ENCODE measurements at regions of chr6 and their contacts with region 1.

Region 1: DNA sequence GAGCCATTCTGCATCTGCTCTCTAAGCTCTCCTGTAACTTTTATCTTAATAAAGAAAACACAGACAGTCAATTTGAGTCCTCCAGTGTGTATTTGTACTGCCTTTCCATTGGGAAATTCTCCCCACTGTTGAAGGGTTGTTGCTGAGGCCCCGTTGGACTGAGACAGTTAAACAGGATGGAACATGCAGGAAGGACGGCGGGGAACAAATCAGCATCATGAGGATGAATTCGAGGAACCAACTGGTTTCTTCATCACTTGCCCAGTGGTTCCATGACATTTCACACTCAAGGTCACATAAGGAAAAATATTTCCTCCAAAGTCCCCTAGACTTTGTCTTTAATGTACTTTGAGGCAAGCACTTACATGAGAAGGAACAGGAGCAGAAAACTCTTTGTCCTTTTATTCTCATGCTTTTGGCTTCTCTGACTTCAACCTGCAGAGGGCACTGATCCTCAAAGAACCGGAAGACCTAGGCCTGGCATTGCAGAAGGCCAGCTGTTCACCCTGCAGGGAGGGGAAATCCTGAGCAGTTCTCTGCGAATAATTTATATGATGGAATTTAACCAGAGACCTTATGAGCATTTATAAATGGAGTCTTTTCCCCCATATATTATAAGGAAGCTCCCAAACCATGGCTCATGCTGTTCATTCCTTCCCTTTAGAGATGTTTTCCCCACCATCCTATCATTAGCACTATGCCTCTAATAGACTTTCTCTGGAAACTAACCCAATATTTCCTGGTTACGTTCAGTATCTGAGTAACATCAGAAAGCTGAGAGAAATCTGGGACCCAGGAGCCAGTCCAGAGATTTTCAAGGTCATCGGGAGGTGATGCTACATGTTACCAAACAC is 55.2 kb upstream of the ADGRF1 start:
- DNase-seq: peak; percentile 88
- ATAC-seq: peak; percentile 80
- H3K4me3 ChIP-seq: no peak overlapping the region
- H3K27ac ChIP-seq: peak overlapping the region; percentile 53
- H3K4me1 ChIP-seq: peaks cover 50% of the 10 kb centered on the region
- H3K27me3 ChIP-seq: no peaks in the 10 kb centered on the region
- CTCF ChIP-seq: peak; percentile 90

Region 2: DNA sequence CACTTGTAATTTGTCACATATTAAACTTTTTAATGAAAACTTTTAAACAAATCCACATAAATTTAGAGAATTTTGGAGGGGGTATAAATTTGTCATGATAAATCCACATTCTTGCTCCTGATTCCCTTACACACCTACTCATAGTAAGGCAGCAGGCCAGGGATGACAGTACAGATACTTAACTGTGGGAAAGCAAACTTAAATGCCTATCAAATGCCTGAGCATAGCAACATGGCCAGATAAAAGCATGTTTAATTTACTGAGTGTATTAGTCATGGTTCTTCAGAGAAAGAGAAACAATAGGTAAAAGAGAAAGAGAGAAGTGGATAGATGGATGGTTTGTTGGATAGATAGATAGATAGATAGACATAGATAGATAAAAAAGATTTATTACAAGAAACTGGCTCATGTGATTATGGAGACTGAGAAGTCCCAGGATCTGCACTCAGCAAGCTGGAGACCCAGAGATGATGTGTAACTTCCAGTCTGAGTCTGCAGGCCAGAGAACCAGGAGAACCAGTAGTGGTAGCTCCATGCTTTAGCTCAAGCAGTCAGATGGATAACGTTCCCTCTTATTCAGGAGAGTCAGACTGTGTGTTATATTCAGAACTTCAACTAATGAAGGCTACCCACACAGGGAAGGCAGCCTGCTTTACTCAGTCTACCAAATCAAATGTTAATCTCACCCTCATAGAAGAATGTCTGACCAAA is 39.3 kb before region 1 on chr6:
- CTCF ChIA-PET with region 1: no interaction called
- POLR2A ChIA-PET with region 1: no interaction called
- intact Hi-C with region 1: loop called (anchors 5 kb)
- DNase-seq: peak; percentile 98
- ATAC-seq: peak; percentile 76
- H3K4me3 ChIP-seq: no peak overlapping the region
- H3K27ac ChIP-seq: peak overlapping the region; percentile 96
- H3K4me1 ChIP-seq: peaks cover 49% of the 10 kb centered on the region
- H3K27me3 ChIP-seq: no peaks in the 10 kb centered on the region
- CTCF ChIP-seq: no peak

Region 3: DNA sequence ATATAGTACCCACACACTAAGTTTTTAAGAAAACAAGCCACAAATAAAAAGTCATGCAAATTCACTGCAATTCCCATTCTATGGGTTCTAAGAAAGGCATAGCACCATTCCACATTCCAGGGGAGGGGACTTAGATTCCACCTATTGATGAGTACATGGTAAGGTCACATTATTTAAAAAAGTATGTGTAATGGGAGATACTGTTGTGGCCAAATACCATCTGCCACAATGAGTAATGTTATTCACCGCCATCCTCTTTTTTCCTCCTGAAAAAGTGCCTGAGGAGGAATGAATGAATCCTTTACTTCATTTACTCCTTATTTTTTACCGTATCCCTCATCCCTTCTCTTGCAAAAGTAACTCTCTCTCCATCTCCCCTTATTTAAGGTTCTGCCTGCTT is 28.2 kb before region 1 on chr6:
- CTCF ChIA-PET with region 1: no interaction called
- POLR2A ChIA-PET with region 1: no interaction called
- intact Hi-C with region 1: no loop called
- DNase-seq: peak; percentile 58
- ATAC-seq: no peak
- H3K4me3 ChIP-seq: no peak overlapping the region
- H3K27ac ChIP-seq: no peak overlapping the region
- H3K4me1 ChIP-seq: peaks cover 30% of the 10 kb centered on the region
- H3K27me3 ChIP-seq: no peaks in the 10 kb centered on the region
- CTCF ChIP-seq: no peak

Region 4: DNA sequence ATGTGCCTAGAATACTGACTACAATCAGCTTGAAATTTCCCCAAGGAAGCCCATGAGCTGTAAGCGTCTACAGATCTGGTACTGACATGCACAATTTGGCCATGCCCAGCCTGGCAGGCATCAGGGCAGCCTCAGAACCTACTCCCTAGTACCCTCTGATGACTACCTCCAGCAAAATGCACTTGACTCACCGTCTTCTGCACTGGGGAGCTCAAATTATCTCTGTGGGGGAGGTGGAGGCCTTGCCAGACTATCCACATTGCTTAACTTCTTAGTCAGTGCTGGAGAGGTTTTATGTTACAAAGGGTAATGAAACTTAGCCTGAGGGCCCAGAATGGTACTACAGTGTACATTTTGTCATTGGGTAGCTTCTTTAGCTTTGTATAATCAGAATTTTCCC is 70.9 kb after region 1 on chr6:
- CTCF ChIA-PET with region 1: interaction called, 5 read pairs
- POLR2A ChIA-PET with region 1: no interaction called
- intact Hi-C with region 1: loop called (anchors 5 kb)
- DNase-seq: peak; percentile 98
- ATAC-seq: peak; percentile 99
- H3K4me3 ChIP-seq: no peak overlapping the region
- H3K27ac ChIP-seq: peak overlapping the region; percentile 91
- H3K4me1 ChIP-seq: peaks cover 50% of the 10 kb centered on the region
- H3K27me3 ChIP-seq: no peaks in the 10 kb centered on the region
- CTCF ChIP-seq: no peak

Region 5: DNA sequence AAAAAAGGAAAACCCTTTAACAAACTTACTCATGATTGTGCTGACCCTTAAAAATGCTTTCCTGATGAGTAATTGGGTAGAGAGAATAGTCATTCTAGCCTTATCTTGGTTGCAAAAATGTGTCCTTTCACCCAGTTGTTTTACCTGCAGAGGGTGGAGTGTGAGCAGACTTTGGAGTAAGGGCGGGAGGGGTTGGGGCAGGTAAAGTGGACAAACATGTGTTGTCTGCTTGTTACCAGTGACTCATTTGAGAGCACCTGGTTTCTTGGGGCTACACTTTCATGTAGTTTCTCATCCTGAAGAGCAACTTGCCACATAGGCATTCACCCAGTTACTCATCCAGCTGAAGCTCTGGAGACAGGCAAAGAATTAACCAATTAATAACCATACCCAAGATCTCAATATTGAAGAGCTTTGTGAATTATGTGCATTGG is 91.3 kb after region 1 on chr6:
- CTCF ChIA-PET with region 1: no interaction called
- POLR2A ChIA-PET with region 1: no interaction called
- intact Hi-C with region 1: loop called (anchors 5 kb)
- DNase-seq: peak; percentile 97
- ATAC-seq: peak; percentile 91
- H3K4me3 ChIP-seq: 0 out of 2 replicates have a peak overlapping the region, but pooled peaks have one; percentile 25
- H3K27ac ChIP-seq: peak overlapping the region; percentile 82
- H3K4me1 ChIP-seq: peaks cover 33% of the 10 kb centered on the region
- H3K27me3 ChIP-seq: no peaks in the 10 kb centered on the region
- CTCF ChIP-seq: no peak

Region 6: DNA sequence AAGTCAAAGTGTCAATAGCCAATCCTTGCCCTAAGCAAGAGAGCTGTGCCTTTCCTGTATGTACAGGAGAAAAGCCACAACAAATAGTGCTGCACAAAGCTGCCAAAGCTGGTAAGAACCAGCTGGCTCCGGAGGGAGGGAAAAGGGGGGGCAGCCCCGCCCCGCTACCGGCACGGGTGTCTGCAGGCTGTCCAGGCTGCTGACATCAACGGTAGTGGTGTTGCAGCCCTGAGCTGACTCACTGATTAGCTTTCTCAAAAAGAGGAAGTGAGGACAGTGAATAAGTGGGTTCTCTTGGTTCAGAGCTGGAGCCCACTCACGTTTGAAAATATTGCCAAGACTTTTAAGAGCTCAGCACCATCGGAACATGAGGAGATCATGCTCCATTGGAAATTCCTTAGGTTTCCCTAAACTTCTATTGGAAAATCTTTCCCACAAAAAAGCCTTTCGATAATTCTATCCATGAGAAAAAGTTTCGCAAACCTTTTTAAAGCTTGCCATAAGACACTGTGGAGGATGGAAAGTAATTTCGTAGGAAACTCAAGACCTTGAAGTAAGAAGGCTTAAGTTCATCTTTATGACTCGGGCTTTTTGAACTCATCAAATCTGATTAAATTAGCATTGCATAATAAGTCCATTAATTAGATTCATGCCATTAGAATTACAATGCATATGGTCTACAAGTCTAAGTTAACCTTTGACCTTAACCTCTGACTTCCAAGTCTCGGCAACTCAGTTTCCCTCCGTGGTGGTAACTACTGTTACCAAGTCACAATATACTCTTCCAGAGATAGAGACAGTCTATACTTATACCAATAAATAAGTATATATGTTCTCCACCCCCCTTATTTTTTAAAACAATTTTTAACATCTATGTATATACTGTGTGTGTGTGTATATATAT is 145.4 kb after region 1 on chr6:
- CTCF ChIA-PET with region 1: interaction called, 3 read pairs
- POLR2A ChIA-PET with region 1: no interaction called
- intact Hi-C with region 1: loop called (anchors 1 kb)
- DNase-seq: peak; percentile 87
- ATAC-seq: peak; percentile 95
- H3K4me3 ChIP-seq: no peak overlapping the region
- H3K27ac ChIP-seq: peak overlapping the region; percentile 63
- H3K4me1 ChIP-seq: peaks cover 17% of the 10 kb centered on the region
- H3K27me3 ChIP-seq: no peaks in the 10 kb centered on the region
- CTCF ChIP-seq: no peak

Region 7: GRCh38 chr6:47407348-47408281 is 310.3 kb after region 1 on chr6:
- CTCF ChIA-PET with region 1: no interaction called
- POLR2A ChIA-PET with region 1: no interaction called
- intact Hi-C with region 1: loop called (anchors 2 kb)
- DNase-seq: peak; percentile 95
- ATAC-seq: peak; percentile 63
- H3K4me3 ChIP-seq: no peak overlapping the region
- H3K27ac ChIP-seq: peak overlapping the region; percentile 95
- H3K4me1 ChIP-seq: peaks cover 51% of the 10 kb centered on the region
- H3K27me3 ChIP-seq: no peaks in the 10 kb centered on the region
- CTCF ChIP-seq: no peak

Region 8: GRCh38 chr6:47524136-47524845 is 427.0 kb after region 1 on chr6:
- CTCF ChIA-PET with region 1: no interaction called
- POLR2A ChIA-PET with region 1: no interaction called
- intact Hi-C with region 1: no loop called
- DNase-seq: no peak
- ATAC-seq: no peak
- H3K4me3 ChIP-seq: no peak overlapping the region
- H3K27ac ChIP-seq: no peak overlapping the region
- H3K4me1 ChIP-seq: no peaks in the 10 kb centered on the region
- H3K27me3 ChIP-seq: no peaks in the 10 kb centered on the region
- CTCF ChIP-seq: no peak

Measured in PC-3 (cell line).